Heart right ventricle (tissue), 16 donors: ENCODE measurements at regions of chr21 and their contacts with region 1.

Region 1: GRCh38 chr21:37551331-37551992 is 184.9 kb downstream of the DYRK1A start:
- DNase-seq: no peak
- ATAC-seq: peak in 6 of 8 donors; percentile 6 to 40 (median 22)
- H3K4me3 ChIP-seq: peak overlapping the region in 4 of 10 donors; percentile 8 to 28 (median 17)
- H3K27ac ChIP-seq: peak overlapping the region; percentile 4 to 82 (median 62)
- H3K4me1 ChIP-seq: peaks cover 4 to 46% (median 24%) of the 10 kb centered on the region in 9 donors
- H3K27me3 ChIP-seq: peaks cover 0 to 7% (median 0%) of the 10 kb centered on the region in 7 donors
- CTCF ChIP-seq: no peak

Region 2: GRCh38 chr21:37532868-37533780 is 18.3 kb before region 1 on chr21:
- intact Hi-C with region 1: loop called in 1 of 10 experiments (anchors 2 kb)
- DNase-seq: peak in 1 of 2 donors; percentile 25
- ATAC-seq: peak in 5 of 8 donors; percentile 35 to 63 (median 55)
- H3K4me3 ChIP-seq: no peak overlapping the region
- H3K27ac ChIP-seq: peak overlapping the region in 1 of 10 donors; percentile 21
- H3K4me1 ChIP-seq: peaks cover 0 to 29% (median 12%) of the 10 kb centered on the region in 9 donors
- H3K27me3 ChIP-seq: peaks cover 0 to 21% (median 0%) of the 10 kb centered on the region in 7 donors
- CTCF ChIP-seq: peak in 2 of 9 donors; percentile 14 to 24